Mammary epithelial cell (primary cell): ENCODE measurements at regions of chr12 and their contacts with region 1.

Region 1: GRCh38 chr12:112198120-112198733 is 72.9 kb downstream of the TRAFD1 start:
- DNase-seq: peak; percentile 17
- H3K4me3 ChIP-seq: no peak overlapping the region
- H3K27ac ChIP-seq: no peak overlapping the region
- H3K4me1 ChIP-seq: no peaks in the 10 kb centered on the region
- H3K27me3 ChIP-seq: no peaks in the 10 kb centered on the region
- CTCF ChIP-seq: peak; percentile 60 to 71

Region 2: GRCh38 chr12:112116232-112117060 is 81.8 kb before region 1 on chr12:
- CTCF ChIA-PET with region 1: no interaction called
- dilution Hi-C with region 1: no loop called
- in situ Hi-C with region 1: no loop called
- intact Hi-C with region 1: loop called (anchors 10 kb)
- DNase-seq: no peak
- H3K4me3 ChIP-seq: no peak overlapping the region
- H3K27ac ChIP-seq: peak overlapping the region; percentile 20
- H3K4me1 ChIP-seq: peaks cover 30% of the 10 kb centered on the region
- H3K27me3 ChIP-seq: no peaks in the 10 kb centered on the region
- CTCF ChIP-seq: no peak

Region 3: DNA sequence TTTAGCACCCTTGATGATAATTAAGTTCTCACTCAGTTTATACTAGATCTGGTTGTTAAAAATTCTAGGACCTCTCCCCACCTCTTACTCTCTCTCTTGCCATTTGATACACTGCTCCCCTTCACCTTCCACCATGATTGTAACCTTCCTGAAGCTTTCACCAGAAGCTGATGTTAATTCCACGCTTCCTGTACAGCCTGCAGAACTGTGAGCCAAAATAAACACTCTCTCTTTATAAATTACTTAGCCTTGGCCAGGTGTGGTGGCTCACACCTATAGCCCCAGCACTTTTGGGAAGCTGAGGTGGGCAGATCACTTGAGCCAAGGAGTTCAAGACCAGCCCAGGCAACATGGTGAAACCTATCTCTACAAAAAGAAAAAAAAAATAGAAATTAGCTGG is 195.1 kb after region 1 on chr12:
- CTCF ChIA-PET with region 1: no interaction called
- dilution Hi-C with region 1: loop called (anchors 10 kb)
- in situ Hi-C with region 1: loop called (anchors 5 to 10 kb)
- intact Hi-C with region 1: no loop called
- DNase-seq: no peak
- H3K4me3 ChIP-seq: no peak overlapping the region
- H3K27ac ChIP-seq: no peak overlapping the region
- H3K4me1 ChIP-seq: no peaks in the 10 kb centered on the region
- H3K27me3 ChIP-seq: no peaks in the 10 kb centered on the region
- CTCF ChIP-seq: no peak